Activated CD4-positive, alpha-beta T cell treated with anti-CD3 and anti-CD28 coated beads for 36 hours (primary cell): ENCODE measurements at regions of chr5 and their contacts with region 1.

Region 1: DNA sequence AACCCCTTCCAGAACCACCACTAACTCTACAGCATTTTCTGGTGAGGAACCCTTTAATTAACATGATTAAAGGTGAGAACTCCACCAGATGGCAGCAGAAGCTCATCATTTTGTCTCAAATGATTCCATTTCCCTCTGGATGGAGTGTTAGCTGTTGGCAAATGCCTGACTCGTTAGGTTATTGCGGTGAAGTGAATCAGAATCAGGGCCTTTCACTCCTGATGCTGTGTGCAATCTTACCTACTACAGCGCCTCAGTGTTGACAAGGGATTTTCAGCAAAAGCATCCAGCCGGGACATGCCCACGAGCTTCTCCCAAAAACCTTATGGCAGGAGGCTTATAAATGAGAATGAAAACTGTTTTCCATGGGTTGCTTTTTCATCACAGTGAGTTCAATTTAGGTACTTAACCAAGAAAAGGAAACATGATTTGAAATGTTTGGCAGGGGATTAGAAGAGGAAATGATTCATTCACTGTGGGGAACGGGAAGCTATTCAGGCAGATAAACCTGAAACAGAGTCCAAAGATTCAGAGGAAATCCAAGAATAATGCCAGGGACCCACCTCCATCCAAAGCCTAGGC is 48.0 kb upstream of the CAST start:
- DNase-seq: peak; percentile 69
- ATAC-seq: peak; percentile 86
- H3K4me3 Mint-ChIP-seq: no peak overlapping the region
- H3K27ac Mint-ChIP-seq: no peak overlapping the region
- H3K4me1 Mint-ChIP-seq: peaks cover 5% of the 10 kb centered on the region
- H3K27me3 Mint-ChIP-seq: peaks cover 17% of the 10 kb centered on the region

Region 2: DNA sequence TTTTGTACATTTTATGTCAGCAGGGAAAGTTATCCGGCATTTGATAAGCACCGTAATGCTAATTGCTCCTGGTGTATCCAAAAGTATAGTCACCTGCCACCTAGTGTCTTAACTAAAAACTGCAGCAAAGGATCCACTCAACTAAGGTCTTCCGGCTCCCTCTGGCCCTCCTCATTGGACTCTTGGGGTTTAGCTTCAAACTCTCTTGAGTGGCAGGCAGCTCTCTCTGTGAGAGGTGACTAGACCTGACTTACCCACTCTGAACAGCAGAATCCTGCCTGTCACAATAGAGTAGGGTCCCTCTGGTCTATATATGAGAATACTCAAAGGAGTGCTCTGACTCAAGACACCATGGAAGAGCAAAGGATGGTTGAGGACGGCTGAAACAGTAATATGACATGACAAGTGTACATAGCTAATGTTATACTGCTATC is 12.4 kb before region 1 on chr5:
- CTCF ChIA-PET with region 1: interaction called, 21 read pairs
- POLR2A ChIA-PET with region 1: no interaction called
- intact Hi-C with region 1: no loop called
- DNase-seq: peak; percentile 64
- ATAC-seq: peak; percentile 69
- H3K4me3 Mint-ChIP-seq: no peak overlapping the region
- H3K27ac Mint-ChIP-seq: no peak overlapping the region
- H3K4me1 Mint-ChIP-seq: peaks cover 15% of the 10 kb centered on the region
- H3K27me3 Mint-ChIP-seq: peaks cover 5% of the 10 kb centered on the region

Region 3: DNA sequence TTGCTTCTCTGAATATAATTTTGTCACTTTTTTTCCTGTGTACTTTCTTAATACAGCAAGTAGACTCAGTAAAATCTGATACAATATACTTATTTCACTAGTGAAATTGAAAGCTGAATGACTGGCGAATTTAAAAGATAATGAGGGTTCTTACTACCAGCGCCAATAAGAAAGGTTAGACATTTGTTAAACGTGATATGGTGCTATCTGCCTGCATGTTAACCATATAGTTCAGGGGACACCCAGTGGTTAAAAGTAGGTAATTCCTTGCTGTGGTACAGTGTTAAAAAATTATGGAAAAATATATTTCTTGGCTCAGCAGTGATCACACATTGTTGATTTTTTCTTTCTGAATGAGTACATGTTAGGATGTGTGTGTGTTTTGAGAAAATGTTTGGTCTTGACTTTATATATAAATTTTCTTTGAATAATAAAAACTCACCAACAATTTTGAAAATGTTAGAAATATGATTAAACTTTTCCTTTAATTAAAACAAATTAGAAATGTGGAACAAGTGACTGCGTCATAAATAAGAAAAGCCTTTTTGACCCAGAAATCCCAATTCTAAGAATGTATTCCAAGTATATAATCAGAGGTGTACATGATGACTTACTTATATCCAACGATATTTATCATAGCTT is 73.7 kb after region 1 on chr5:
- CTCF ChIA-PET with region 1: interaction called, 29 read pairs
- POLR2A ChIA-PET with region 1: no interaction called
- intact Hi-C with region 1: loop called (anchors 1 kb)
- DNase-seq: no peak
- ATAC-seq: peak; percentile 93
- H3K4me3 Mint-ChIP-seq: no peak overlapping the region
- H3K27ac Mint-ChIP-seq: no peak overlapping the region
- H3K4me1 Mint-ChIP-seq: peaks cover 23% of the 10 kb centered on the region
- H3K27me3 Mint-ChIP-seq: no peaks in the 10 kb centered on the region

Region 4: GRCh38 chr5:96729156-96729555 is 115.0 kb after region 1 on chr5:
- CTCF ChIA-PET with region 1: interaction called, 8 read pairs
- POLR2A ChIA-PET with region 1: no interaction called
- intact Hi-C with region 1: loop called in 1 of 2 experiments (anchors 5 kb)
- DNase-seq: no peak
- ATAC-seq: no peak
- H3K4me3 Mint-ChIP-seq: no peak overlapping the region
- H3K27ac Mint-ChIP-seq: no peak overlapping the region
- H3K4me1 Mint-ChIP-seq: peaks cover 3% of the 10 kb centered on the region
- H3K27me3 Mint-ChIP-seq: no peaks in the 10 kb centered on the region

Region 5: DNA sequence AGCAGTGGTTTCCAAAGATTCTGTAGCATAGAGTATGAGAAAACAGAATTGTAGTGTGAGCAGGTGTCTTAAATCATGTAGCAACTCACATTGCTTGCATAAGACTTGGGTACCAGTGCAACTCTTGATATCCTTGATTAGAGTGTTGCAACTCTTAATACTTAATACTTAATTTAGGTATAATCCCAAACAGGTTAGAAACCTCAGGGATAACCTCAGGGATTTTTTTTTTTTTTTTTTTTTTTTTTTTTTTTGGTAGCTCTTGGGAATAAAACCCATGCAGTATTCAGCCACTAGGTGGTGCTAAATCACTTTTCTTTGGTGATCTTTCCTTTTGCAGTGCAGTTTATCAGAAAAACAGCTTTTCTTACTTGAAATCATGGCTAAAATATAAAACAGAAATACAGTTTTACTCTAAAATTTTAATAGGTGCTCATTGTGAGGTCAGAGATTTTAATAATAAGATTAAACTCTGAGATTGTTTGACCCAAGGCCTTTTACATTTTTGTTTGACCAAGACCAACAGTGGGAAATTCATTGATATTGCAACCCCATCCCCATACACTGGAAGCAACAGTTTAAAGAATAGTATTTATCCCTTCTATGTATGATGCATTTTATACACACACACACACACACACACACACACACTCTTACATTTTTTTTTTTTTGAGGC is 138.3 kb after region 1 on chr5:
- CTCF ChIA-PET with region 1: interaction called, 10 read pairs
- POLR2A ChIA-PET with region 1: no interaction called
- intact Hi-C with region 1: loop called (anchors 5 kb)
- DNase-seq: peak; percentile 36
- ATAC-seq: no peak
- H3K4me3 Mint-ChIP-seq: no peak overlapping the region
- H3K27ac Mint-ChIP-seq: no peak overlapping the region
- H3K4me1 Mint-ChIP-seq: peaks cover 18% of the 10 kb centered on the region
- H3K27me3 Mint-ChIP-seq: no peaks in the 10 kb centered on the region